Activated T-helper 2 cell treated with anti-CD3 and anti-CD28 coated beads, Interferon-gamma antibody, Interleukin-2, Interleukin-4, amounts not matched to agents 10 μg/mL and 5 μg/mL and 100 μg/mL, durations not matched to agents 14 hours and 24 hours and 36 hours (primary cell): ENCODE measurements at regions of chr10 and their contacts with region 1.

Region 1: DNA sequence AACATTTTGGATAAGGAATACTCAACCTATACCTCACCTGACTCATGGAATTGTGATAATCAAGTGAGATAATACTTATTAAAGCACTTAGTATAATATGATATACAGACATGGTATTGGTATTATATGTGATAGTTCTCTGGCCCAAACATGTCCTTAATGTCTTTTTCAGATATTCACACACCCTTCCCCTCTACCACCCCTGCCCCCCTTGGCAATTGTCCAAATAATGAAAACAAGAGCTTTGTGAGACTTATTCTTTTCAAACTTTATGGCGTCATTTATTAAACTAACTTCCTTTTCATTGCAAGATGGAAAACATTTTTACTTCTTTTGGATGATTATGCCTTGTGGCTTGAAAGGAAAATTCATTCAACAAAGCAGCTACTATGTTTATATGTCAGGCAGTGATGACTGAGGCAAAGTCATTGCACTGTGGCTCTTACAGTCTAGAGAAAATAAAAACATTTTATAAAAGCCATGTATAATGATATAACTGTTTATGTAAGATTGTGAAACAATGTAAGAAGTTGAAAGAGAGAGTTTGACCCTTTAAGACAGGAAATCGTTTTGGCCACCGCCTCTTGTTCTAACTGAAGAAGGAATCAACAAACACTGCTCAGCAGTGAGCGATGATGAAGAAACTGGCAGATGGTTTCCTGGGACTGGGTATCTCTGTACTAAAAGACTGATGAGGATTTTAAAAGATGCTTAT is 27.4 kb downstream of the MINPP1 start:
- DNase-seq: no peak
- H3K4me3 Mint-ChIP-seq: no peak overlapping the region
- H3K27ac Mint-ChIP-seq: no peak overlapping the region
- H3K4me1 Mint-ChIP-seq: peaks cover 4% of the 10 kb centered on the region
- H3K27me3 Mint-ChIP-seq: no peaks in the 10 kb centered on the region

Region 2: DNA sequence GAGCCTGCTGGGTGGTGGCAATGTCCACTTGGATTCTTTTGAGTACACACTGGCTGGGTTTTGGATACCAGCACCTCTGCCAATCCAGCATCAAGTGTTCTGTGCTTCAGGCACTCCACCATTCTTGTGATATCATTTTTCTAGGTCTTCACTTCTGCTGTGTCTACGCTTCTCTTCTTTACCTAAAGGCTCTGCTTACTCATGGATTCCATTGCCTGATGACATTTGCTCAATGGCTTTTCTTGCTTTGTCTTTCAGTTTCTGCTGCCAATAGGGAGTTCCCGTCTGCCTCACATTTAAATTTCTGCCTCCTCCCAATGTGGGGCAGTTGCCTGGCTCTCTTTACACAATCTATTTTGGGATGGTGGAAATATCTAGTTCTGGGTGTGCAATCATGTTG is 114.9 kb after region 1 on chr10:
- intact Hi-C with region 1: loop called (anchors 5 kb)
- DNase-seq: no peak
- H3K4me3 Mint-ChIP-seq: no peak overlapping the region
- H3K27ac Mint-ChIP-seq: peak overlapping the region; percentile 54
- H3K4me1 Mint-ChIP-seq: peaks cover 14% of the 10 kb centered on the region
- H3K27me3 Mint-ChIP-seq: peaks cover 4% of the 10 kb centered on the region

Region 3: GRCh38 chr10:87734987-87735827 is 203.1 kb after region 1 on chr10:
- intact Hi-C with region 1: loop called (anchors 1 kb)
- DNase-seq: no peak
- H3K4me3 Mint-ChIP-seq: no peak overlapping the region
- H3K27ac Mint-ChIP-seq: no peak overlapping the region
- H3K4me1 Mint-ChIP-seq: no peaks in the 10 kb centered on the region
- H3K27me3 Mint-ChIP-seq: peaks cover 30% of the 10 kb centered on the region